ENCODE measurements at regions of chr10 and their contacts with region 1.

Region 1: DNA sequence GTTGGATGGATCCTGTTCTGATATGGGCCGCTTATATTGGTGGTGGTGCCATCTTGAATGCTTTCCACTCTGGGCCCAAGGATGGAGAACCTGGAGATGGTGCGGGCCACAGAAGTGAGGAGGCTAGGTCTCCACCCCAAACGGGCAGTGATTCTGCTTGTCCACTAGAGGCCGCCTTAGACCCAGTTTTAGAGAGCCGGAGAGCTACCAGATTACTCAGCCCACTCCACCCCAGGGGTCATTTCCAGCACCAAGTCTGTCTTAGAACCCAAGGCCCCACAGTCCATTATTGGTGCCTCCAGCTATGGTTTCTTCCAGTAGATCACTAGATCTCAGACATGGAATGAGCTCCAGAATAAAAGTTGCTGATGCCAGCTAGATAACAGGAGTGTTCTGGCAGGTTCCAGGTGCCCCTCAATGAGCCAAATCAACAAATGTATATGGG is 11.8 kb upstream of the CAMK2G start:
- DNase-seq: peak; percentile 34 to 82 (median 66)
- ATAC-seq: peak; percentile 99
- H3K4me3 ChIP-seq: no peak overlapping the region
- H3K4me3 Mint-ChIP-seq: no peak overlapping the region
- H3K27ac ChIP-seq: no peak overlapping the region
- H3K27ac Mint-ChIP-seq: no peak overlapping the region
- H3K4me1 ChIP-seq: no peaks in the 10 kb centered on the region
- H3K4me1 Mint-ChIP-seq: no peaks in the 10 kb centered on the region
- H3K27me3 ChIP-seq: no peaks in the 10 kb centered on the region
- H3K27me3 Mint-ChIP-seq: no peaks in the 10 kb centered on the region
- CTCF ChIP-seq: peak; percentile 78

Region 2: DNA sequence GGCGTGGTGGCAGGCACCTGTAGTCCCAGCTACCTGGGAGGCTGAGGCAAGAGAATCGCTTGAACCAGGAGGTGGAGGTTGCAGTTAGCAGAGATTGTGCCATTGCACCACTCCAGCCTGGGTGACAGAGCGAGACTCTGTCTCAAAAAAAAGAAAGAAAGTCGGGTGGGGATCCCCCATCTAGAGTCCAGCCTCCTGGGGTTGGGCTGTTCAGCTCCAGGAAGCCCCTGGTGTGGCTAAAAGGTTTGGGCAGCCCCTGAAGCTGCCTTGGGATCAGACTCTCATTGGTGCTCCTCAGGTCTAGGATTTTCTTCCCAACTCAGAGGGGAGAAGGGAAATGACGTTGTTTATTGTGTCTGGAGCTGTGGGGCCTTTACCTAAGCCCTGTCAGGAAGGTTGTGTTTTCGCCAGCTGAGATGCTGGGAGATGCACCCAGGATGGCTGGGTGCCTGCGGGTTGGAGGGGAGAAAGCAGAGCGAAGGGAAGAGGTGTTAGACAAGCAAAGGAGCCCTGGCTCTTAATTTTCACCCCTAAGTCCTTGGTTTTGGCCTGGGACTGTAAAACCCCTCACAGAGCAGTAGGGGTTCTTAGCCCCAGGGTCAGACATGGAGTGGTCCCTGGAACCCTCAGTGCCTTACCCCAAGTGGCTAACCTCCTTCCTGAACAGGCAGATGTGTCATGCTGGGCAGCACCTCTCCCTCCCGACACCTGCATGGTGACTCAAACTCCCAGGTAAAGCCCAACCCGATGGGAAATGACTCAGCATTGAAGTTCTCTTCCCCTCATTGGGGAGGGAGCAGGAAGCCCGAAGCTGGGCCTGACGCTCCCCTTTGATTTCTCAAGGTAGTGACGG is 45.9 kb after region 1 on chr10:
- CTCF ChIA-PET with region 1: interaction called, 618 read pairs
- POLR2A ChIA-PET with region 1: interaction called, 3 read pairs
- intact Hi-C with region 1: no loop called
- DNase-seq: peak in 8 of 9 experiments; percentile 37 to 68 (median 58)
- ATAC-seq: peak; percentile 89
- H3K4me3 ChIP-seq: no peak overlapping the region
- H3K4me3 Mint-ChIP-seq: no peak overlapping the region
- H3K27ac ChIP-seq: no peak overlapping the region
- H3K27ac Mint-ChIP-seq: no peak overlapping the region
- H3K4me1 ChIP-seq: peaks cover 6% of the 10 kb centered on the region
- H3K4me1 Mint-ChIP-seq: peaks cover 7% of the 10 kb centered on the region
- H3K27me3 ChIP-seq: no peaks in the 10 kb centered on the region
- H3K27me3 Mint-ChIP-seq: peaks cover 18% of the 10 kb centered on the region
- CTCF ChIP-seq: no peak

Region 3: DNA sequence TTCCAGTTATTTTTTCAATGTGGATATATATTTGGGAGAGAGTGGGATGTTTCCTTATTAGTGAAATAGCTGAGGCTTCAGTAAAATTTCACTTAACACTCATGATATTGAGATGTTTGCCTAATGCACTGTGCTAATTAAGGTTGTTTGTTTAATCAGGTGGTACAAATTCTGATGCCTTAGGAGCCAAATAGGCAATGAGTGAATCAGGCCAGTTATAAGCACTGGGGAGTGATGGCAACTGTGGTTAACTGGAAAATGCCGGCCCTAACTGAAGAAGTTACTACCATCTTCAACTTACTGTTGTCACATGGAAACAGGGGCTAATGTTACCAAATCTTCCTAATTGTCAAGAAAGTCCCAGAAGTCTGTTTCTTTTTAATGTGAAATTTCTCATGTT is 143.8 kb after region 1 on chr10:
- CTCF ChIA-PET with region 1: interaction called, 17 read pairs
- POLR2A ChIA-PET with region 1: no interaction called
- intact Hi-C with region 1: loop called (anchors 1 to 2 kb)
- DNase-seq: no peak
- ATAC-seq: no peak
- H3K4me3 ChIP-seq: no peak overlapping the region
- H3K4me3 Mint-ChIP-seq: no peak overlapping the region
- H3K27ac ChIP-seq: no peak overlapping the region
- H3K27ac Mint-ChIP-seq: no peak overlapping the region
- H3K4me1 ChIP-seq: no peaks in the 10 kb centered on the region
- H3K4me1 Mint-ChIP-seq: peaks cover 10% of the 10 kb centered on the region
- H3K27me3 ChIP-seq: no peaks in the 10 kb centered on the region
- H3K27me3 Mint-ChIP-seq: no peaks in the 10 kb centered on the region
- CTCF ChIP-seq: no peak

Region 4: GRCh38 chr10:74058658-74059057 is 172.6 kb after region 1 on chr10:
- CTCF ChIA-PET with region 1: interaction called, 10 read pairs
- POLR2A ChIA-PET with region 1: no interaction called
- intact Hi-C with region 1: no loop called
- DNase-seq: peak in 3 of 9 experiments; percentile 32 to 59 (median 43)
- ATAC-seq: no peak
- H3K4me3 ChIP-seq: no peak overlapping the region
- H3K4me3 Mint-ChIP-seq: no peak overlapping the region
- H3K27ac ChIP-seq: no peak overlapping the region
- H3K27ac Mint-ChIP-seq: no peak overlapping the region
- H3K4me1 ChIP-seq: peaks cover 15% of the 10 kb centered on the region
- H3K4me1 Mint-ChIP-seq: peaks cover 21% of the 10 kb centered on the region
- H3K27me3 ChIP-seq: no peaks in the 10 kb centered on the region
- H3K27me3 Mint-ChIP-seq: no peaks in the 10 kb centered on the region
- CTCF ChIP-seq: no peak

Measured in CD8-positive, alpha-beta T cell (primary cell).